Motor neuron (in vitro differentiated cells): ENCODE measurements at regions of chrX and their contacts with region 1.

Region 1: DNA sequence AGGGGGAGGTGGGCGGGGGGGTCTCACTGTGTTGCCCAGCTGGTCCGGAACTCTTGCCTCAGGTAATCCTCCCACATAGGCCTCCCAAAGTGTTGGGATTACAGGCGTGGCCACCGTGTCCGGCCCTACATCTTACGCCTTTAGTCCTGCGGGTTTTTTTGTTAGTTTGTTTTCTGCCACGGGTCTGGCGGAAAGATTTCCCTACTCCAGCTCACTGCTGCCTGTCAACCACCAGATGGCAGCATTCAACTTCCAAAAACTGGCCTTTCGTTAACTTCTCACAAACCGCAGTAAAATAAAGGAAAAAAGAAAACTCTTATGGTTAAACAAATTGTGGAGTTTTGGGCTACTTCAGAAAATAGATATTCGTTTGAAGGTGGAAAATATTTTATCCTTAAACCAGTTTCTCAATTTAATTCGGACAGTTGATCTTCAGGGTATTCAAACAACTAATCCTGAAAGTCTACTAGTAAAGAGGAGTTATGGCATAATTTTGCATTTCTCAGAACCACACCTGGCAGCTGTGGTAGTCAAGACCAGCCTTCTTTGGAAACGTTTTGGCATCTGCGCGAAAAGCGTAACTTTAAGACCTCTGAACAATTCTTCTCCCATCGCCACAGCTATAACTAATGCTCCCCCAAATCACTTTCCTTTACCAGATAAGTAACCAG is 41.1 kb downstream of the LUZP4 start:
- ATAC-seq: peak in 6 of 8 experiments; percentile 40 to 91 (median 56)
- H3K4me3 ChIP-seq: peak overlapping the region in 3 of 5 donors; percentile 15 to 24 (median 22)
- H3K27ac ChIP-seq: no peak overlapping the region
- H3K4me1 ChIP-seq: no peaks in the 10 kb centered on the region

Region 2: GRCh38 chrX:115214151-115214550 is 116.5 kb before region 1 on chrX:
- in situ Hi-C with region 1: no loop called
- ATAC-seq: no peak
- H3K4me3 ChIP-seq: no peak overlapping the region
- H3K27ac ChIP-seq: no peak overlapping the region
- H3K4me1 ChIP-seq: no peaks in the 10 kb centered on the region

Region 3: DNA sequence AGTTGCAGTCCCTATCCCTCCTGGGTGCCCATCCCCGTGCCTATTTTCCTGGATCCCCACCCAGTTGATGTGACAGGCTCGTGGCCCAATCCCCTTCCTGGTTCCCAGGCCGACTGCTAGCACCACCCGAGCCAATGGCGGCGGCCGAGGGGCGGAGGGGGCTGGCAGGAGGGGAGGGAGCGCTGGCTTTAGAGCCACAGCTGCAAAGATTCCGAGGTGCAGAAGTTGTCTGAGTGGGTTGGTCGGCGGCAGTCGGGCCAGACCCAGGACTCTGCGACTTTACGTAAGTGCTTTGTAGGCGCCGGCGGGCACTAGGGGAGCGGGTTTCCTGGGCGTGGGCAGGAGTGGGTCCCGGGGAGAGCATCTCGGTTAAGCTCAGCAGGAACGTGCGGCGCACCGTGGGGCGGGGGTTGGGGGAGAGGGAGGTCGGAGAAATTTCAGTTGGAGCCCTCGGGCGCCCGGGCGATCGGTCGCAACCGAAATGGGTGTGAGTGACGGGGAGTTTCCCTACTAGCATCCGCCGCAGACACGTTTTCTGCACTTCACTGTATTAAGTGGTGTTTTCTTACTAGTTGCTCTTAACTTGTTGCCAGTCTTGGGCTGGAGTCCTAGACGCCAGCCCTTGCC is 230.5 kb after region 1 on chrX and contains the start of gene PLS3:
- in situ Hi-C with region 1: loop called in 1 of 9 experiments (anchors 25 kb)
- ATAC-seq: peak; percentile 79 to 91 (median 86)
- H3K4me3 ChIP-seq: peak within 1 kb of the TSS; percentile 45 to 68 (median 51)
- H3K27ac ChIP-seq: peak within 1 kb of the TSS in 1 of 2 donors; percentile 68
- H3K4me1 ChIP-seq: peaks cover 0 to 11% of the 10 kb centered on the region in 2 donors
- total RNA-seq, gene PLS3: 18.4 to 168 (median 60.5) TPM

Region 4: DNA sequence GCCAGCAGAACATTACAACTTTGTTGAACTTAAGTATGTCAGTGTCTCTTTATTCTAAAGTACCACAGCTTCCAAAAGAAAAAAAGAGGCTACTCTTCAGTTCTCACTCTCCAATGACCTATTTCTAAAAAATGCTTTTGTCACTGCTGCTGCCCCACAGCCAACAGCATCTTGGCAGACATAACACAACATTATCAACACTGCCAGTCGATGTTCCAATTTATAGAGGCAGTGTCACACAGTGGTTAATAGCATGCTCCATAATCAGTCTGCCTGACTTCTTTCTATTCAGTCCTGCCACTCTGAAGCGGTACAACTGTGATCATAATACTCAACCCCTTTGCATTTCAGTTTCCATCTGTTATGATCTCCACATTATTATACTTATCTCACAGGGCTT is 299.6 kb after region 1 on chrX:
- in situ Hi-C with region 1: loop called in 1 of 9 experiments (anchors 10 kb)
- ATAC-seq: no peak
- H3K4me3 ChIP-seq: no peak overlapping the region
- H3K27ac ChIP-seq: no peak overlapping the region
- H3K4me1 ChIP-seq: no peaks in the 10 kb centered on the region

Region 5: GRCh38 chrX:115642895-115643530 is 312.4 kb after region 1 on chrX:
- in situ Hi-C with region 1: loop called in 3 of 9 experiments (anchors 10 kb)
- ATAC-seq: peak in 1 of 8 experiments; percentile 43
- H3K4me3 ChIP-seq: no peak overlapping the region
- H3K27ac ChIP-seq: no peak overlapping the region
- H3K4me1 ChIP-seq: no peaks in the 10 kb centered on the region